A549 (cell line): ENCODE measurements at regions of chr17 and their contacts with region 1.

Region 1: DNA sequence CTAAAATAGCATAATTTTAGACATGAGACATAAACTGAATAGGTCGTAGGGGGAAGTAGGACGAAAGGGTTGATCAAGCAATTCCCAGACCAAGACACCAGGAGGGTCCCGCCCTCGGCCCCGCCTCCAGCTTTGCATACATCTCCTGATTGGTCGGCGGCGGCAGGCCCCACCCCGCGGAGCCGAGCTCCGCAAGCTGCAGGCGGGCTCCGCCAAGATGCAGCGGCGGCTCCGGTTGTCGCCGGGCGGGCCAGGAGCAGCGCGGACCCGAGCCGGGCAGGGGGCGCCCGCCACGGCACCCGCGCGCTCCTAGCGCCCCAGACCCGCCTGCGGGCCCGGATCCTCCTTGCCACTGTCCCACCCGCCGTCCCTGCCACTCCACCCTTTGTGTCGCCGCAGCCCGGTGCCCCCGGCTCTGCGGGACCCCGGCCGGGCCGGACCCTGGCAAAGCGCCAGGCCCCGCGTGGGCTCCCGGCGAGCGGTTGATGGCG is at the start of gene CDR2L:
- DNase-seq: peak; percentile 94
- ATAC-seq: peak; percentile 82 to 87
- H3K4me3 ChIP-seq: peak within 1 kb of the TSS; percentile 80
- H3K27ac ChIP-seq: peak within 1 kb of the TSS; percentile 94 to 95
- H3K4me1 ChIP-seq: peaks cover 53% of the 10 kb centered on the region
- CTCF ChIP-seq: no peak
- EP300 ChIP-seq: no peak
- POLR2A ChIP-seq: peak; percentile 95
- RAD21 ChIP-seq: no peak
- polyA plus RNA-seq, gene CDR2L: 18.0 and 18.5 TPM in 2 replicates

Region 2: DNA sequence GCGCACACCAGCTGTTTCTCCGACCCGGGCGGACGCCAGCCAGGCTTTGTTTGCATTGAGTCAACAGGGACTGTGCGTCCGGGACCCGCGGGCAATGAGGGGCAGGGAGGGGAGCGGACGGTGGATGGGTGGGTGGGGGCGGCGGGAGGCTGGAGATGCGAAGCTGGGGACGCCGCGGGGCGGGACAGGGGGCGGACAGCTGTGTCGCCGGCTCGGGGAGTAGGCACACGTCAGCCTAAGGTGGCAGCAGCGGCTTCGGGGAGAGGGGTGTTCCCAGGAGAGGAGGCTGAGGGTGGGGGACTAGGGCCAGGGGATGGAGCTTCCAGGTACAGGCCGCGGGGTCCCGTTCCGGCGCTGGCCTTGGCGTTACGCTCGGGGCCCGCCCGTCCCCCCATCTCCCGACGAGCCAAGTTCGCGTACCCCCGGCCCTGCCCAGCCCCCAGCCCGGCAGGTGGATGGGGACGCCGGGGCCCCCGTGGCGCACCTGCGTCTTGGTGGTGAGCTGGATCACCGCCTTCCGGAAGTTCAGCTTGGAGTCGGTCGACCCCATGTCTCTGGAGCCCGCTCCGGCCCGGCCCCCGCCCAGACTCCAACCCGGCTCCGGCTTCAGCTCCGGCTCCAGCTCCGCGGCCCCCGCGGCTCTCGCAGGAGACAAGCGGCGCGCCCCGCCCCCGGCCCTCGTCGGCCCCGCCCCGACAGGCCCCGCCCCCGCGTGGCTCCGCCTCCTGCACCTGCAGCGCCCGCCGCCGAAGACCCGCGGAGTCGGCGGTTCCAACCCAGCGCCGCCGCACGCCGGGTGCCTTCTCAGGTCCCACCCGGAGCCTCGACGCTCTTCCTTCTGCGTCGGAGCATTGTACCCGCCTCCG is 15.1 kb before region 1 on chr17 and contains the start of gene HID1:
- CTCF ChIA-PET with region 1: interaction called, 64 read pairs
- POLR2A ChIA-PET with region 1: interaction called, 21 read pairs
- DNase-seq: peak; percentile 56 to 88
- ATAC-seq: peak; percentile 83 to 85
- H3K4me3 ChIP-seq: peak within 1 kb of the TSS; percentile 71
- H3K27ac ChIP-seq: peak within 1 kb of the TSS; percentile 77 to 84
- H3K4me1 ChIP-seq: peaks cover 9% of the 10 kb centered on the region
- CTCF ChIP-seq: no peak
- EP300 ChIP-seq: no peak
- POLR2A ChIP-seq: no peak; the same call in 1 of the 2 replicates
- RAD21 ChIP-seq: no peak
- polyA plus RNA-seq, gene HID1: 11.7 and 15.2 TPM in 2 replicates

Region 3: GRCh38 chr17:75019146-75019545 is 31.7 kb after region 1 on chr17:
- CTCF ChIA-PET with region 1: interaction called, 332 read pairs
- POLR2A ChIA-PET with region 1: interaction called, 4 read pairs
- DNase-seq: no peak
- ATAC-seq: peak; percentile 15 to 44; a peak in 2 of 6 replicates
- H3K4me3 ChIP-seq: no peak overlapping the region
- H3K27ac ChIP-seq: no peak overlapping the region
- H3K4me1 ChIP-seq: no peaks in the 10 kb centered on the region; the same call in 2 of the 3 replicates
- CTCF ChIP-seq: no peak
- EP300 ChIP-seq: no peak
- POLR2A ChIP-seq: no peak
- RAD21 ChIP-seq: no peak